Naive thymus-derived CD4-positive, alpha-beta T cell (primary cell): ENCODE measurements at regions of chr10 and their contacts with region 1.

Region 1: DNA sequence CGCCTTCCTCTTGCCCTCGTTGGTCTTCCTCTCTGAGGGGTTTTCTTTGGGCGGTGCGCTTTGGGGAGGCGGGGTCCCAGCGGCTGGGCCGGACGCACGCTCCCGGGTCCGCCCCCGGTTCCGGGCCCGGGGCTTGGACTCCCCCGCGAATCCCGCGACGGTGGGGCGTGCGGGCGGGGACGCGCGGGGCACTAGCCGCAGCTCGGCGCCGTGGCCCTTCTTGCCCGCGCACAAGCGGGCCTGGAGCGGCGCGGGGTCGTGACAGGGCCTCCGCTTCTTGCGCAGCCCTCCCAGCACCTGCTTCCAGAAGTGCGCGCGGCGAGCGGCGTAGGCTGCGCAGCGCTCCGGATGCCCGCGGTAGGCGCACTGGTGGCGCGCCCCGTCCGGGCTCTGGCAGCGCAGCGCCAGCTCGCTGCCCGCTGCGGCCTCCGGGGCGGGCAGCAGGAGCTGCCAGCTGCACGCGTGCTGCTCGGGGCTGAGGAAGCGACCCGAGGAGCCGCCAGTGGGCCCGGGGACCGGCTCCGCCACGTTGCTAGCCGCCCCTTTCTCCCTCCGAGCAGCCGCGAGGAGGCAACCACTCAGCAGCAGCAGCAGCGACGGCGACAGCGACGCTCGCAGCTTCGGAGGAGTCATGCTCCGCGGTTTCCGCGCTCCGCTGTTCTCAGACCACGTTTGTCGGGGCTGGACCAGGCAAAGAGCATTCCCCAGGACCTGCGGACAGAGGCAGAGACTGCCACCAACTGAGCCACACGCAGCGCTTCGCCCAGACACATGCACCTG is 759 bp downstream of the FGFBP3 start:
- DNase-seq: peak; percentile 51 to 79 (median 74)
- ATAC-seq: peak; percentile 91
- H3K4me3 ChIP-seq: peak overlapping the region; percentile 77
- H3K4me3 Mint-ChIP-seq: peak overlapping the region; percentile 85 to 96 (median 93)
- H3K27ac ChIP-seq: peak overlapping the region; percentile 65
- H3K27ac Mint-ChIP-seq: peak overlapping the region; percentile 73 to 92 (median 88)
- H3K4me1 ChIP-seq: peaks cover 0 to 10% of the 10 kb centered on the region in 2 donors
- H3K4me1 Mint-ChIP-seq: peaks cover 18 to 36% (median 28%) of the 10 kb centered on the region in 7 donors
- H3K27me3 ChIP-seq: no peaks in the 10 kb centered on the region
- H3K27me3 Mint-ChIP-seq: peaks cover 0 to 13% (median 0%) of the 10 kb centered on the region in 5 donors

Region 2: DNA sequence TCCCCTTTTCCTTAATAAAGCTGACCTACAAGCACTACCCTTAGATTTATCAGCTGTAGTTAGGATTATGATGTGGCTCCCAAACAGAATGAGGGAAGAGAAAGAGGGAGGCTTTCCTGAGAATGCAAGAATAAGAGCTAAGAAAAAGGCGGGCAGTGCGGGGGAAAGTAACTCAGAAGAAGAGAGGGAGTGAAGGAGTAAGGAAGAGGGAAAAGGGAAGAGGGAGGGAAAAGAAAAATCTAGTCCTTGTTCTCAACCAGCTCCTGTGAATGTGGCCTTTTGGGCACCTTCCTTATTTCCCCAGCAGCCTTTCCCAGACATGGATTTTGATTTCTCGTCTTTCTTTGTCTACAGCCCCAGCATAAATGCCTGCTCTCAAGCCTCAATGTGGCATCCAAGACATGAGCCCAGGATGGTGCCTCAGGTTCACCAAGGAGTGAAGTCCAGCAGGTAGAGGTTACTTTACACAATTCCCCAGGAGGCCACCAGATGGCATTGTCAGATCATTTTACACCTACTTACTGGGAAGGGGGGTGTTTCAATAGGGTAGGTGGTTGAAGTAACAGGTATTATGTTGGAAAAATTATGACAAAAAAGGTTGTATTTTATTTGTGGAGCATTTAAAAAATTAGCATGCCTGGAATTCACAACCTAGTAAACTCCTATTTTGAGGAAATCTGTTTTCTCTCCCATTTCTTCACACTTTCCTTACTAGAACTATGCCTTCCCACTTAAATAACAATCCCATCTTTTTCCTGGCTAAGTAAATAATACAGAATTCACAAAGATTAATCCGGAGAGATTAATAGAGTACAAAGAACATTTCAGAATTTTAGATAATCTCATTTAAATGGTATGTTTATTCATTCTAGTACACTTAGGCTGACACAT is 1157.2 kb before region 1 on chr10:
- CTCF ChIA-PET with region 1: no interaction called
- POLR2A ChIA-PET with region 1: no interaction called
- intact Hi-C with region 1: loop called in 1 of 2 experiments (anchors 5 kb)
- DNase-seq: peak in 8 of 9 donors; percentile 10 to 38 (median 25)
- ATAC-seq: peak; percentile 54
- H3K4me3 ChIP-seq: no peak overlapping the region
- H3K4me3 Mint-ChIP-seq: no peak overlapping the region
- H3K27ac ChIP-seq: no peak overlapping the region
- H3K27ac Mint-ChIP-seq: no peak overlapping the region
- H3K4me1 ChIP-seq: no peaks in the 10 kb centered on the region
- H3K4me1 Mint-ChIP-seq: no peaks in the 10 kb centered on the region
- H3K27me3 ChIP-seq: no peaks in the 10 kb centered on the region
- H3K27me3 Mint-ChIP-seq: peaks cover 38 to 54% (median 48%) of the 10 kb centered on the region in 5 donors

Region 3: DNA sequence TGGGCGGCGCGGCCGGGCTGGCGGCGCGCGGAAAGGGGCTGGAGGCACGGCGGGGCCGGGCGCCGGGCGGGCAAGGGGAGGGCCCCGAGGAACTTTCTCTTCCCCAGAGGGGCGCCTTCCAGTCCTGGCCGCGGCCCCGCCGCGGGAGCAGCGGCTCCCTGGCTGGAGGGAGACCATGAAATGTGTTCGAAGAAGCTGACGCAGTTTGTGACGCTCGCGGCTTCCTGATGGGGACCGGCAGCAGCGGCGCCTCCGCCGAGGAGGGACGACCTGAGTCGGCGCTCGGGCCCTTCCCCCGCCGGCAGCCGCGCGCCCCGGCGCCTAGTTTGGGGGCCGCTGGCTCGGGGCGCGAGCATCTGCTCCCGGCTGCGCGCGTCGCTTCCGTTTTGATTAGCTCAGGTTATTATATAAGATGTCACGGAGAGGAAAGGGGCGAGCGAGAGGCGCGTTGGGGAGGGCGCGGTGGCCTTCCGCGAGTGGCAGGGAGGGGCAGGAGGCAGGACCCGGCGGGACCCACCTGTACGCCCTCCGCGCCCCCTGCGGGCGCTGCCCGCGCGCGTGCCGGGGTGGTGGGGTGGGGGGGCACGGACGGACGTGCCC is 745.2 kb before region 1 on chr10:
- CTCF ChIA-PET with region 1: no interaction called
- POLR2A ChIA-PET with region 1: interaction called, 3 read pairs
- intact Hi-C with region 1: loop called in 1 of 2 experiments (anchors 5 kb)
- DNase-seq: peak; percentile 72 to 92 (median 88)
- ATAC-seq: peak; percentile 75
- H3K4me3 ChIP-seq: peak overlapping the region; percentile 74
- H3K4me3 Mint-ChIP-seq: peak overlapping the region; percentile 88 to 95 (median 93)
- H3K27ac ChIP-seq: peak overlapping the region; percentile 96
- H3K27ac Mint-ChIP-seq: peak overlapping the region; percentile 88 to 98 (median 95)
- H3K4me1 ChIP-seq: peaks cover 8 to 20% of the 10 kb centered on the region in 2 donors
- H3K4me1 Mint-ChIP-seq: peaks cover 27 to 61% (median 51%) of the 10 kb centered on the region in 7 donors
- H3K27me3 ChIP-seq: no peaks in the 10 kb centered on the region
- H3K27me3 Mint-ChIP-seq: peaks cover 0 to 19% (median 0%) of the 10 kb centered on the region in 5 donors

Region 4: GRCh38 chr10:91409869-91410637 is 498.5 kb before region 1 on chr10 and contains the start of gene HECTD2:
- CTCF ChIA-PET with region 1: no interaction called
- POLR2A ChIA-PET with region 1: interaction called, 4 read pairs
- intact Hi-C with region 1: loop called (anchors 1 to 5 kb)
- DNase-seq: peak; percentile 76 to 89 (median 86)
- ATAC-seq: peak; percentile 93
- H3K4me3 ChIP-seq: peak within 1 kb of the TSS; percentile 83
- H3K4me3 Mint-ChIP-seq: peak within 1 kb of the TSS; percentile 75 to 93 (median 90)
- H3K27ac ChIP-seq: peak within 1 kb of the TSS; percentile 88
- H3K27ac Mint-ChIP-seq: peak within 1 kb of the TSS; percentile 81 to 96 (median 91)
- H3K4me1 ChIP-seq: peaks cover 8 to 17% of the 10 kb centered on the region in 2 donors
- H3K4me1 Mint-ChIP-seq: peaks cover 8 to 18% (median 13%) of the 10 kb centered on the region in 7 donors
- H3K27me3 ChIP-seq: no peaks in the 10 kb centered on the region
- H3K27me3 Mint-ChIP-seq: peaks cover 0 to 27% (median 0%) of the 10 kb centered on the region in 5 donors
- total RNA-seq, gene HECTD2: 1.1 to 4.6 (median 2.0) TPM

Region 5: GRCh38 chr10:91813251-91813650 is 95.3 kb before region 1 on chr10:
- CTCF ChIA-PET with region 1: interaction called, 11 read pairs
- POLR2A ChIA-PET with region 1: no interaction called
- intact Hi-C with region 1: no loop called
- DNase-seq: no peak
- ATAC-seq: no peak
- H3K4me3 ChIP-seq: no peak overlapping the region
- H3K4me3 Mint-ChIP-seq: peak overlapping the region in 1 of 10 donors; percentile 29
- H3K27ac ChIP-seq: no peak overlapping the region
- H3K27ac Mint-ChIP-seq: no peak overlapping the region
- H3K4me1 ChIP-seq: peaks cover 0 to 7% of the 10 kb centered on the region in 2 donors
- H3K4me1 Mint-ChIP-seq: peaks cover 20 to 52% (median 46%) of the 10 kb centered on the region in 7 donors
- H3K27me3 ChIP-seq: no peaks in the 10 kb centered on the region
- H3K27me3 Mint-ChIP-seq: no peaks in the 10 kb centered on the region

Region 6: DNA sequence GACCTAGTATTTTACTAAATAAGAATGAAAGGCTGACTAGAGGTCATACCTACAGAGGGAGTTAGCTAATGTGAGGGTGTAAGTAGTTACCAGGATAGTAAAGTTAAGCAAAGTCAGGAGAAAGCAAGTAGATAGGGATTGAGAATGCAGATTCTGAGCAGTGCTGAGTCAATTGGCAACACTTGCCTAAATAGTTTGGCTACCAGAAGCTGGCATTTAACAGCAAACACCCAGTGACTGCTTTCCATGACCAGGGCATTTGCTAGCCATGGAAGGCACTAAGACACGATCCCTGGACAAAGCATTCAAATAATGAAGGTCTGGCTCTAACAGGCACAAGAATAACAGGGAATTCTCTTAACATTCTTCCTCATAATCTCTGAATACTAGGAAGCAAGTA is 84.5 kb before region 1 on chr10:
- CTCF ChIA-PET with region 1: no interaction called
- POLR2A ChIA-PET with region 1: no interaction called
- intact Hi-C with region 1: no loop called
- DNase-seq: no peak
- ATAC-seq: no peak
- H3K4me3 ChIP-seq: no peak overlapping the region
- H3K4me3 Mint-ChIP-seq: no peak overlapping the region
- H3K27ac ChIP-seq: no peak overlapping the region
- H3K27ac Mint-ChIP-seq: peak overlapping the region in 1 of 9 donors; percentile 36
- H3K4me1 ChIP-seq: no peaks in the 10 kb centered on the region
- H3K4me1 Mint-ChIP-seq: peaks cover 0 to 6% (median 0%) of the 10 kb centered on the region in 7 donors
- H3K27me3 ChIP-seq: no peaks in the 10 kb centered on the region
- H3K27me3 Mint-ChIP-seq: no peaks in the 10 kb centered on the region

Region 7: DNA sequence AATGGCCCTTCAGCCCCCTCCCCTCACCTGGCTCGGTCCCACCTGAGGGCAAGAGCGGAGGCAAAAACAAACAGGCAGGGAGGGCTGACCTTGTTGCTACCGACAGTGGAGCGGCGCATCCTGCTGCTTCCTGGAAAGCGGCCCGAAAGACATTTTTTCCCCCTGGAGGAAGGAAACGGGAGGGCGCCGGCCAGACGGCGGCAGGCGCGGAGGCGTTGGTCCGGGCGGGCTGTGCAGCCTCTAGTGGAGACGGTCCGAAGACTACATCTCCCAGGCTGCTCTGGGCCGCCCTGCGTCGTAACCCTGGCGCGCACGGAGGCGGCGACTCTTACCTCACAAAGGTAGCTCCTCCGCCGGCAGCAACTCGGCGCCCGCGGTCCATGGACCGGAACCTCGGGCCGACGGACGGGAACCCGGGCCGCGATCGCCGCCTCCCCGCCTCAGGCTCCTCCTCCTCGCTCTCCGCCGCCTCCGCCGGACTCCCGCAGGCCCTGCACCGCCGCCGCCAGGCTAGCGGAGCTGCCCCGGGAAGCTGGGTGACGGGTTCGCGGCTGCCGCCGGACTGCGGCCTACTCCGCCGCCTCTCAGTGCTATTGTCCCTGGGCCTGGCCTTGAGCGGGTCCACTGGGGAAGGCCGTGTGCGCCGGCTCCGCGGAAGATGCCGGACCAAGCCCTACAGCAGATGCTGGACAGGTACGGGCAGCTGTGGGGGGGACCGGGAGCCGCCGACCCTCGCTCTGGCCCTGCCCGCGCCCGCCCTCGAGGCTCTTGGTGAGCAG is 382.5 kb after region 1 on chr10 and contains the starts of genes CPEB3 and MARCHF5:
- CTCF ChIA-PET with region 1: no interaction called
- POLR2A ChIA-PET with region 1: no interaction called
- intact Hi-C with region 1: loop called in 1 of 2 experiments (anchors 5 kb)
- DNase-seq: peak; percentile 77 to 92 (median 85)
- ATAC-seq: peak; percentile 99
- H3K4me3 ChIP-seq: peak within 1 kb of the TSS; percentile 90
- H3K4me3 Mint-ChIP-seq: peak within 1 kb of the TSS; percentile 85 to 97 (median 95)
- H3K27ac ChIP-seq: peak within 1 kb of the TSS; percentile 90
- H3K27ac Mint-ChIP-seq: peak within 1 kb of the TSS; percentile 75 to 96 (median 88)
- H3K4me1 ChIP-seq: peaks cover 0 to 6% of the 10 kb centered on the region in 2 donors
- H3K4me1 Mint-ChIP-seq: peaks cover 21 to 41% (median 31%) of the 10 kb centered on the region in 7 donors
- H3K27me3 ChIP-seq: no peaks in the 10 kb centered on the region
- H3K27me3 Mint-ChIP-seq: no peaks in the 10 kb centered on the region
- total RNA-seq, gene CPEB3: 2.0 to 3.3 (median 2.2) TPM
- total RNA-seq, gene MARCHF5: 22.0 to 37.1 (median 33.8) TPM